ENCODE measurements at regions of chr7 and their contacts with region 1.

Region 1: DNA sequence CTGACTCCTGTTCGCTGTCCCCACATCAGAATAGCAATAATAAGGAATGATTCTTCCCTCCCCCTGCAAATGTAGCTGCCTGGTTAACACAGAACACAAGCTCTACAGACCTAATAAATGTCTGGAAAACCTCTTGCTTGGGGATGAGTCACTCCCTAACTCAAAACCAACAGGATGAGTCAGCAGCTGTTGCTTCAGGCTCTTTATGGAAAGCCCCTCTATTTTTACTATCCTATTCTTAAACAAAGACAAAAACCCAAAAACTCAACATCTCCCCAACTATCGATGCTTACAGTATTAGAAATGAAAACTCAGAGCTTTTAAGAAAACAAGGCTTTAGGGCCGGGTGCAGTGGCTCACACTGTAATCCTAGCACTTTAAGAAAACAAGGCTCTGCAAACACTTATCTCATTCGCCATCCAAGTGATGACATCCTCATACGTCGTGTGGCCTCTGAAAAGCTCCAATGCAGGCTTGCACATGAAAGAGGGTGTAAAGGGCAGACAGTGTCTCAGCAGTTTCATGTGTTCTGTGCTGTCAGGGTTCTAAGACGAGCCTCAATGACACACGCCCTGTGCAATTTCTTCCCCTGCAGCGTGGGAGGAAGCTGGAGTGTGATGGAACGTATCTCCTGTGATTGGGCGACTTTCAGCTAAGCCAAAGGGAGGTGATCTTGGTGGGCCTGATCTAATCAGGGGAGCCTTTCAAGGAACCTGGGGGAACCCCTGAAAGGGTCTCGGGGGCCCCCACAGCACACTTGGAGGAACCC is 70.1 kb downstream of the AMZ1 start:
- DNase-seq: peak; percentile 72
- H3K4me3 Mint-ChIP-seq: peak overlapping the region; percentile 59
- H3K27ac Mint-ChIP-seq: peak overlapping the region; percentile 95
- H3K4me1 Mint-ChIP-seq: peaks cover 63% of the 10 kb centered on the region
- H3K27me3 Mint-ChIP-seq: no peaks in the 10 kb centered on the region

Region 2: DNA sequence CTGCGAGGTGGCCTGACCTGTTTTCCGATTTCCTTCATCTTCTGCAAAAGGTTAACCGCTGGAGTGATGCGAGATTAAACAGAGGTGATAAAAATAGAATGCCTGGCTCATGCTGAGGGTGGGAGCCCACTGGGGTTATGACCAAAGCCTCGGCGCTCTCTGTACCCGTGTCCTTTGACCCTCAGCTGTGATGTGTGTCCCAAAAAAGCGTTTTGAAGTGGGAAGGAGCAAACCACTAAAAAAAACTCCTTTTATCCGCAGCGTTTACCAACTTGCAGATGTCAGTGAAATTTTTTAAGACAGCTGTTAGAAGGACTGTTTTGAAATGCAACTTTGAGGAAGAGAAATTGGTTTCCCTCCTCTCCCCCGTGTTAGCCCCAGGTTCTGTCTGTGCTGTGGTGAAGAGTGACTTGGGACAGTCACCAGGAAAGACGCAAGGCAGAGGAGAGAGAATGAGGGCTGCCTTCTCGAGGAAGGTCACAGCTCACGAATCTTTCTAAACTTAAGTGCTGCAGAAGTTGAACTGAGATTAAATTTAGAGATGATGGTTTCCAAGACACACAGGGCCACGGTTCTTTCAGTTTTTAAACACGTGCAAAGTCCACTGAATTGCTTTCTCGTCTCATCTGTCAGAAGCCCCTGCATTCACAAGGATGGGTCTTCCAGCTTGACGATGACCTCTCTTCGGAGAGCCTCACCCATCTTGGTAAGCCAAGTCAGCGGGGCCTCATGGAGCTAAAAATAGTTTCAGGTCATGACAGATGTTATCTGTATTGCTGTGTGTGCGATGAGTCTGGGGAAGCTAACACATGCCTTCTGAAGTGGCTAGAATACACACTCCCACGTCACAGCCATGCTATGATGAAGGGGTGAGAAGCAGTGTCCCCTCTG is 42.5 kb before region 1 on chr7:
- intact Hi-C with region 1: loop called (anchors 1 kb)
- DNase-seq: no peak
- H3K4me3 Mint-ChIP-seq: peak overlapping the region; percentile 69
- H3K27ac Mint-ChIP-seq: peak overlapping the region; percentile 85
- H3K4me1 Mint-ChIP-seq: peaks cover 77% of the 10 kb centered on the region
- H3K27me3 Mint-ChIP-seq: peaks cover 12% of the 10 kb centered on the region

Region 3: DNA sequence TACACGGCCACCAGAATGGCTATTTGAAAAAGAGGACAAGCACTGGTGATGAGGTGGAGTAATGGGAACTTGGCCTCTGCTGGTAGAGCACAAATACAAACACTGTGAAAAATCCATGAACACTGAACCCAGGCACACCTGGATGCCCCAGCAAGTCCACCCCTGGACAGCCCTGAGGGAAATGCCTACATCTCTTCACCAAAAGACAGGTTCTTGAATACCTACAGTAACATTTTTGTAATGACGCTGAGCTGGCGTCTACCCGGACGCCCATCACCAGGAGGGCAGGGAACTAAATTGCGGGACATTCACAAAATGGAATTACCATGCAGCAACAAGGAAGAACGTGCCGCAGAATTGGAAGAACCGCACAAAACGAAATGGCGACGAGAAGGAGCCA is 15.5 kb after region 1 on chr7:
- intact Hi-C with region 1: loop called (anchors 1 kb)
- DNase-seq: no peak
- H3K4me3 Mint-ChIP-seq: no peak overlapping the region
- H3K27ac Mint-ChIP-seq: peak overlapping the region; percentile 90
- H3K4me1 Mint-ChIP-seq: peaks cover 37% of the 10 kb centered on the region
- H3K27me3 Mint-ChIP-seq: no peaks in the 10 kb centered on the region

Region 4: DNA sequence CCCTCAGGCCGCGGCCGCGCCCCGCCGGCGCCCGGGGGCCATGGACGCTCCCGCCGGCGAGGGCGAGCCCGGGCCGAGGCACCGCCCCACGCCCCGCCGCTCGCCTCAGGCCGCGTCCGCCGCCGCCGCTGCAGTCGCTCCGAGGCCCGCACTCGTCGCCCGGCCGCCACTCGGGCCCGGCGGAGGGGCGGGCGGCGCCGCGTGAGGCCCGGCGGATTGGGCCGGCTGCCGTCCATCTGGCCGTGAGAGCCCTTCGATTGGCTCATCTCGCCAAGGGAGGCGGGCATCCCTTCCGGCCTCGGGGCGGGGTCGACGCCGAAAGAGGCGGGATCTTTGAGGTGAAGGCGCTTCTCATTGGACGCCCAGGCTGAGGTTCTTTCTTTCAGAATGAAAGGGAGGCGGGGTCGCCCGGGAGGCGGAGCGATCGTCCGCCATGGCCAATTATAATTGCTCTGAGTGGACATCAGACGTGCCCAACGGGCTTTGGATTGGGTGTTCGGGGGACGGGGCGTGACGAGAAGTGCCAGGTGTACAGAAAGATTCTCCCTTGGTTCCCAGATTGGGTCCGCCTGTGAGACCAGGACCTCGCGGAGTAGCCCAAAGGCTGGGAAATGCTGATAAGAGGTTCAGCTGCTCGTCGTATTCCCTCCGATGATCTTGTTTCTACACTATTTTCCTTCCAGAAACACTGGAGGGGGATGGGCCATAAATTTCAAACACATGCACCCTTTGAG is 86.2 kb after region 1 on chr7 and contains the start of gene GNA12:
- intact Hi-C with region 1: loop called (anchors 1 kb)
- DNase-seq: peak; percentile 99
- H3K4me3 Mint-ChIP-seq: peak within 1 kb of the TSS; percentile 90
- H3K27ac Mint-ChIP-seq: peak within 1 kb of the TSS; percentile 72
- H3K4me1 Mint-ChIP-seq: peaks cover 31% of the 10 kb centered on the region
- H3K27me3 Mint-ChIP-seq: no peaks in the 10 kb centered on the region
- total RNA-seq, gene GNA12: 36.3 and 36.4 TPM in 2 replicates

Measured in activated T-helper 1 cell treated with anti-CD3 and anti-CD28 coated beads, Interleukin-12 subunit alpha, Interleukin-12 subunit beta, Interleukin-2, Interleukin-4 antibody, amounts not matched to agents 30 ng/mL and 10 ng/mL and 1 ng/mL, durations not matched to agents 14 hours and 24 hours and 36 hours (primary cell).